GM13976 (cell line): ENCODE measurements at regions of chr2 and their contacts with region 1.

Region 1: GRCh38 chr2:38947240-38948239 is 57.9 kb downstream of the ARHGEF33 start:
- DNase-seq: peak; percentile 73
- CTCF ChIP-seq: peak; percentile 73

Region 2: GRCh38 chr2:39234754-39235153 is 287.2 kb after region 1 on chr2:
- in situ Hi-C with region 1: loop called (anchors 5 kb)
- DNase-seq: no peak
- CTCF ChIP-seq: no peak